ENCODE measurements at regions of chr3 and their contacts with region 1.

Region 1: GRCh38 chr3:141370065-141370533 is 1.8 kb downstream of the ZBTB38 start:
- DNase-seq: peak; percentile 94
- H3K4me3 ChIP-seq: peak overlapping the region in 1 of 3 experiments; percentile 86
- H3K27ac ChIP-seq: peak overlapping the region; percentile 96
- H3K4me1 ChIP-seq: peaks cover 47% of the 10 kb centered on the region
- H3K27me3 ChIP-seq: no peaks in the 10 kb centered on the region
- CTCF ChIP-seq: peak; percentile 36 to 47
- POLR2A ChIP-seq: peak; percentile 41

Region 2: GRCh38 chr3:141321109-141321497 is 49.0 kb before region 1 on chr3:
- CTCF ChIA-PET with region 1: no interaction called
- POLR2A ChIA-PET with region 1: no interaction called
- dilution Hi-C with region 1: no loop called
- intact Hi-C with region 1: no loop called
- DNase-seq: no peak
- H3K4me3 ChIP-seq: no peak overlapping the region
- H3K27ac ChIP-seq: no peak overlapping the region
- H3K4me1 ChIP-seq: peaks cover 14% of the 10 kb centered on the region
- H3K27me3 ChIP-seq: no peaks in the 10 kb centered on the region
- CTCF ChIP-seq: no peak
- POLR2A ChIP-seq: no peak

Region 3: DNA sequence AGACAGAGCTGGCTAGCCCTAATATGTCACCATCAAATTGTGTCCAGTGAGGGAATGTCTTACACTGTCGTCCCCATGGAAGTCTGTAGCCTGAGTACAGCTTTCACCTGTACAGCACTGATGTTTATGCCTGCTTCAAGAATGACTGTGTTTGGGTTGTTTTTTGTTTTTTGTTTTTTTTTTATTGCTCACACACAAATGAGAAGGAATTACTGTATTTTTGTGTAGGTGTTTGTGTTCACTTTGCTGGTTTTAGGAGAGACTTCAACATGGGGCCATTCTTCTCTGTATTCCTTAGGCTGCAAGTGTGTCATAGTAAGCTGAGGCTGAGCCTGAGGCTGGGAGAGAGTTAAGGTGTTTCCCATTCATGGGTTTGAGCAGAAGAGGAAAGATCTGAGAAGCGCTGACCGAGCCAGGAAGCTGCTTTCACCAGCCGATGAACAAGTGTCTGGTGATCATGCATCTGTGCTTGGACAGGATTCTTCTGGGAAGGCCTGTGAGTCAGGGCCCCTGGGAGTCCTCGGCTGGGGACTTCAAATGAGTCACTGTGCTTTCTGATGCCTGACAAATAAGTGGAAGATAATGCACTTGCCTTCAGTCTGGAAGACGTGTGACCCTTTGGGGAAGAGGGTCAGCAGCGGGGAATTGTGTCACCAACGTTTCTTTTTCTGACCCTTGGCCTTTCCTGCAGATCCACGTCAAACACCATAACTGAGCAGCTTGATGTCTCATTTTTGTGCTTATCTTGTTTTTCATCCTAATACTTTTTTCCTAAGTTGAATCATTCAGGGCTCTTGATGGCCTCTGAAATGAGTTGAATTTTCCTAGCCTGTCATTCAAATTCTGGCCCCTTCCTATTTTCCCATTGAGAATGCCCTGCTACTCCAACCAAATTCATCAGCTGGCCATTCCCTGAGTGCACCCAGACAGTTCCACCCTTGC is 38.5 kb before region 1 on chr3:
- CTCF ChIA-PET with region 1: interaction called, 4 read pairs
- POLR2A ChIA-PET with region 1: no interaction called
- dilution Hi-C with region 1: no loop called
- intact Hi-C with region 1: loop called (anchors 1 kb)
- DNase-seq: peak; percentile 95
- H3K4me3 ChIP-seq: no peak overlapping the region
- H3K27ac ChIP-seq: peak overlapping the region; percentile 72
- H3K4me1 ChIP-seq: peaks cover 28% of the 10 kb centered on the region
- H3K27me3 ChIP-seq: no peaks in the 10 kb centered on the region
- CTCF ChIP-seq: no peak
- POLR2A ChIP-seq: no peak

Region 4: GRCh38 chr3:141346418-141346817 is 23.7 kb before region 1 on chr3:
- CTCF ChIA-PET with region 1: no interaction called
- POLR2A ChIA-PET with region 1: no interaction called
- dilution Hi-C with region 1: no loop called
- intact Hi-C with region 1: no loop called
- DNase-seq: peak; percentile 58
- H3K4me3 ChIP-seq: no peak overlapping the region
- H3K27ac ChIP-seq: no peak overlapping the region
- H3K4me1 ChIP-seq: peaks cover 12% of the 10 kb centered on the region
- H3K27me3 ChIP-seq: peaks cover 0 to 2% of the 10 kb centered on the region in 2 experiments
- CTCF ChIP-seq: no peak
- POLR2A ChIP-seq: no peak

Region 5: DNA sequence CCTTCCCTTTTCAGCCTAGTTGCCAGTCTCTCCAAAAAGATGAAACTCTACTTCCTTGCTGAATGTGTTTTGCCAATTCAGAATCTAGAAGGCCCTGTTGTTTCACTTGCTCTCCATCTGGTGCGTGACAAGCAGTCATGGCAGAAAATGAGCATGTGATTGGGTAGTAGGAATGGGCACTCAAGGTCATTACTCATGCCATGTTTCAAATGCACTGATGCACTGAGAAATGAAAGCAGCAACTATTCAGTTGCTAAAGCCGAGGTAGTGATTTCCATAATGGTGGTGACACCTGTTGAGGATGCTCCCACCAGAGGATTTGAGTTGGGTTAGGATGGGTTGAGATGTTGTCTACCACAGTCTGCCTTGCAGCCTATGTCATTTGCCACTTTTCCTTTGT is 10.9 kb after region 1 on chr3:
- CTCF ChIA-PET with region 1: interaction called, 11 read pairs
- POLR2A ChIA-PET with region 1: no interaction called
- dilution Hi-C with region 1: no loop called
- intact Hi-C with region 1: no loop called
- DNase-seq: no peak
- H3K4me3 ChIP-seq: no peak overlapping the region
- H3K27ac ChIP-seq: no peak overlapping the region
- H3K4me1 ChIP-seq: no peaks in the 10 kb centered on the region
- H3K27me3 ChIP-seq: no peaks in the 10 kb centered on the region
- CTCF ChIP-seq: no peak
- POLR2A ChIP-seq: no peak

Region 6: DNA sequence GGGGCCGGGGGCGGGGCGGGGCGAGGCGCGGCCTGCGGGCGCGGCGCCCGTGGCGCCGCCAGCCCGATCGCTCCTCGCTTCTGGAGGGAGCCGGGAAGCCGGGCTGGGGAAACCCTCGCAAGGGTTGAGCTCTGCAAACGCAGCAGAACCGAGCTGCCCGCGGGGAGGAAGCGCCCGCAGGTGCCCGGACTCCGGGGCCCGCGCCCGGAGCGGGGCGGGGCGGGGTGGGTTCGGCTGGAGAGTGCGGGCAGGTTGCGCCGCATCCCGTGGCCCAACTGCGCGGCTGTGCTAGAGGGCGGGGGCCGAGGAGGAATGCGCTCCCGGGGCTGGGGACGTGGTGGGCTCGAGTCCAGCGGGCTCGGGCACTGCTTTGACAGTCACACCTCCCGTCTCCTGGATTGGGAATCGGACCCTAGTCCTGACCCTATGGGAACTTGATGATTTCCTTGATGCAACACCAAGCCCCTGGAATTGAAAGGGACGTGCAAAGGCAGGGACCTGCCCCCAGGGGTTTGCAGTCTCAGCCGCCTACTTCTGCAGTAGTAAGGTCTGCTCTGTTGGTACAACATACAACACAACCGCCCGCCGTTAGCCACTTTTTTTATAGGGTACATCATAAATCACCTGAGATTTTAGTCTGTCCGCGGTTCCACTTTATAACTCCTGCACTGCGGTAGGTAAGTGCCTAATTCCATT is 32.5 kb after region 1 on chr3:
- CTCF ChIA-PET with region 1: interaction called, 13 read pairs
- POLR2A ChIA-PET with region 1: no interaction called
- dilution Hi-C with region 1: no loop called
- intact Hi-C with region 1: loop called (anchors 1 kb)
- DNase-seq: peak; percentile 76
- H3K4me3 ChIP-seq: peak overlapping the region; percentile 8 to 86 (median 65)
- H3K27ac ChIP-seq: peak overlapping the region; percentile 97
- H3K4me1 ChIP-seq: peaks cover 47% of the 10 kb centered on the region
- H3K27me3 ChIP-seq: no peaks in the 10 kb centered on the region
- CTCF ChIP-seq: peak in 1 of 2 donors; percentile 2
- POLR2A ChIP-seq: peak; percentile 60

Region 7: GRCh38 chr3:141412087-141412935 is 42.2 kb after region 1 on chr3:
- CTCF ChIA-PET with region 1: interaction called, 28 read pairs
- POLR2A ChIA-PET with region 1: interaction called, 4 read pairs
- dilution Hi-C with region 1: no loop called
- intact Hi-C with region 1: loop called (anchors 1 kb)
- DNase-seq: peak; percentile 88
- H3K4me3 ChIP-seq: peak overlapping the region in 1 of 3 experiments; percentile 27
- H3K27ac ChIP-seq: peak overlapping the region; percentile 90
- H3K4me1 ChIP-seq: peaks cover 68% of the 10 kb centered on the region
- H3K27me3 ChIP-seq: no peaks in the 10 kb centered on the region
- CTCF ChIP-seq: no peak
- POLR2A ChIP-seq: peak; percentile 41

Measured in endothelial cell of umbilical vein (primary cell).